Activated CD4-positive, alpha-beta memory T cell treated with anti-CD3 and anti-CD28 coated beads for 36 hours (primary cell): ENCODE measurements at regions of chr9 and their contacts with region 1.

Region 1: DNA sequence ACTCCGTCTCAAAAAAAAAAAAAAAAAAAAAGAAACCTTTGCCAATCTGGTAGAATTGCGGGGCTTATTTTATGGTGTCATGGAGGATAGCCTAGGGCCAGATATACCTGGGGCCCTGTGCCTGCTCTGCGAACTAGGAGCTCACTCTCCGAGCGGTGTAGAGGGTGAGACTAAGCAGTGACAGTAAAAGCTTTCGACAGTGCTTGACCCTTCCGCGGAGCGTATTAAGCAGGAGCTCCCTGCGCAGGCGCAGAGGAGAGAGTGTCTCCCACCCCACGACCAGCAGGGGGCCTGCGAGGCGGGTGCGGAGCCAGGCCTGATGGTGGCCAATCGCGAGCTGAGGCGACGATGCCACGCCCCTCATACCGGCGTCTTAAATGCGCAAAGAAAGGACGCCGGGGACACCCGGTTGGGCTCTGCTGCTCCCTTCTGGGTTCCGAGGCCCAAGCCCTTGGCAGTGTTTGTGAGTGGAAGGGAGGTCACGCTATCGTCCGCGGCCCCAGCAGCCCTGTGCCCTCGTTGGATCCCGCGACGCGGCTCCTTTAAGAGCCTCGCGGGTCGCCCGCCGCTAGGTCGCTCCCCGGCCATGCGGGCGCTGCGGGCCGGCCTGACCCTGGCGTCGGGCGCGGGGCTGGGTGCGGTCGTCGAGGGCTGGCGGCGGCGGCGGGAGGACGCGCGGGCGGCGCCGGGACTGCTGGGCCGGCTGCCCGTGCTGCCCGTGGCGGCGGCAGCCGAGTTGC is at the start of gene ENDOG:
- DNase-seq: peak; percentile 99
- H3K4me3 Mint-ChIP-seq: peak within 1 kb of the TSS; percentile 77
- H3K27ac Mint-ChIP-seq: peak within 1 kb of the TSS; percentile 23
- H3K4me1 Mint-ChIP-seq: peaks cover 17% of the 10 kb centered on the region
- H3K27me3 Mint-ChIP-seq: no peaks in the 10 kb centered on the region
- total RNA-seq, gene ENDOG: 13.8 to 14.2 TPM

Region 2: DNA sequence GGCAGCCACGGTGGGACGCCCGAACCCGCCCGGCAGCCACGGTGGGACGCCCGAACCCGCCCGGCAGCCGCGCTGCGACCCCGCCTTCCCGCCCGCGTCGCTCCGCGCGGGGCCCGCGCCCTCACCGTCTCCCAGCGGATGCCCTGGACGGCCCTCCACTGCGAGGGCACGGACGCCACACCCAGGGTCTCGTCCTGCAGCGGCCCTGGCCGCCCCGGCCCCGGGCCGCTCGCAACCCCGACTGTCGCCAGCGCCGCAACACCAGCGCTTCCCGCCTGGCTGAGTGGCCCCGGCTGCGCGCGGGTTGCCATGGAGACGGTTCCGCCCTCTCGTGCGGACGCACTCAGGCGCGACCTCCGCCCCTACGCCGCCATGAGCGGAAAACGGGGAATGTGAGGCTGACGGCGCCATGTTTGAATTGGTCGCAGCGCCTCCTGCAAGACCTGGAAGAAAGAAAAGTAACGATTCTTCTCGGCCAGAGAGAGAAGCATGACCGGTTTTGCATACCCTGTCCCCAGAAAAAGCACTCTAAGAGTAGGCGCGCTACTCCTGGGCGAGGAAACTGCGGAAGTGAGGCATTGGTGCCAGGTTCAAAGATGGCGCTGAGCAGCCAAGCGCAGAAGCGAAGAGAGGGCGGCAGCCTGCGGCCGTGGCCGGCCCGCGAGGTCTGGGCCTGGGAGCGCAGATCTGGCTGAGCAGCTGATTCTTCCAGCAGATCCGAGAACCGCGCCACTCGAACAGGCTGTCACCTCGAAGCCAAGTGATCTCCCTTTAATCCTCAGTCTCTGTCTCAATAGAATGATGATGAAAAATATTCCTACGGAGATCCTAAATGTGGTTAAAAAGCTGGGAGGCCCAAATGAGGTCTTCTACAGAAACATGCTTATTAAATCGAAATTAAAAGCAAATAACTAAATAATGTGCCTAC is 161.6 kb before region 1 on chr9 and contains the start of gene DYNC2I2:
- CTCF ChIA-PET with region 1: interaction called, 5 read pairs
- POLR2A ChIA-PET with region 1: no interaction called
- intact Hi-C with region 1: loop called (anchors 5 kb)
- DNase-seq: peak; percentile 97
- H3K4me3 Mint-ChIP-seq: peak within 1 kb of the TSS; percentile 83
- H3K27ac Mint-ChIP-seq: peak within 1 kb of the TSS; percentile 99
- H3K4me1 Mint-ChIP-seq: peaks cover 7% of the 10 kb centered on the region
- H3K27me3 Mint-ChIP-seq: no peaks in the 10 kb centered on the region
- total RNA-seq, gene DYNC2I2: 44.9 to 45.2 TPM

Region 3: GRCh38 chr9:128723866-128724743 is 94.2 kb before region 1 on chr9 and contains the start of gene ZDHHC12:
- CTCF ChIA-PET with region 1: interaction called, 13 read pairs
- POLR2A ChIA-PET with region 1: interaction called, 3 read pairs
- intact Hi-C with region 1: loop called (anchors 5 kb)
- DNase-seq: peak; percentile 99
- H3K4me3 Mint-ChIP-seq: peak within 1 kb of the TSS; percentile 95
- H3K27ac Mint-ChIP-seq: peak within 1 kb of the TSS; percentile 91
- H3K4me1 Mint-ChIP-seq: peaks cover 31% of the 10 kb centered on the region
- H3K27me3 Mint-ChIP-seq: no peaks in the 10 kb centered on the region
- total RNA-seq, gene ZDHHC12: 65.8 to 68.7 TPM

Region 4: GRCh38 chr9:128781187-128782070 is 36.8 kb before region 1 on chr9:
- CTCF ChIA-PET with region 1: interaction called, 12 read pairs
- POLR2A ChIA-PET with region 1: no interaction called
- intact Hi-C with region 1: no loop called
- DNase-seq: no peak
- H3K4me3 Mint-ChIP-seq: no peak overlapping the region
- H3K27ac Mint-ChIP-seq: no peak overlapping the region
- H3K4me1 Mint-ChIP-seq: no peaks in the 10 kb centered on the region
- H3K27me3 Mint-ChIP-seq: no peaks in the 10 kb centered on the region

Region 5: DNA sequence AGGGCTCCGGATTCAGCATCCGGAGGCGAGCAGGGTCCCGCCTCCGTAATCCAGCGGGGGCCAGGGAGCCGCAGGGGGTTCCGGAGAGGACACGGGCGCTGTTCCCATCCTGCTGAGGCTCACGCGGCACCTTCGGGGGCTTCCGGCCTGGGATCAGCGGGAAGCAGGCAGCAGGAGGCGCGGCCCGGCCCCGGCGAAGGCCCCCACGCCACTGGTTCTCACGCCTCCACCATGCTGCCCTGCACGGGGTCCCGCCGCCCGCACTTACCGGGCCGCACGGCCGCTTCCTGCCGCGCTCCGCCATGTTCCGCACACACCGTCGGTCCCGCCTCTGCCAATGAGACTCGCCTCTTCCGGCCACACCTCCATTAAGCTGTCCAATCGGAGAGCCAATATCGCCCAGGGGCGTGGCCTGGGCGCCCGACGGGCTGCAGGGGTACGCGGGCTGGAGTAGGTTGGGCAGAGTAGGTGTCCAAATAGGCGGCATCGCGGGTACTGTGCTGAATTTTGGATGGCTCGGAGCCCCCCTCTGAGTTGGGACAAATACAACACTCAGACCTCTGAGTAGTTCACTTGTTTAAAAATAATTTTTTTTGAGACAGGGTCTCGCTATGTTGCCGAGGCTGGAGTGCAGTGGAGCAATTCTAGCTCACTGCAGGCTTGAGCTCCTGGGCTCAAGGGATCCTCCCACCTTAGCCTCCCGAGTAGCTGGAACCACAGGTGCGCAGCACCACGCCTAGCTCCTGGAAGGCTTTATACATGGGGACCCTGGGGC is 11.4 kb after region 1 on chr9 and contains the start of gene SPOUT1:
- CTCF ChIA-PET with region 1: interaction called, 39 read pairs
- POLR2A ChIA-PET with region 1: interaction called, 31 read pairs
- intact Hi-C with region 1: loop called (anchors 1 kb)
- DNase-seq: peak; percentile 97
- H3K4me3 Mint-ChIP-seq: peak within 1 kb of the TSS; percentile 91
- H3K27ac Mint-ChIP-seq: peak within 1 kb of the TSS; percentile 86
- H3K4me1 Mint-ChIP-seq: peaks cover 23% of the 10 kb centered on the region
- H3K27me3 Mint-ChIP-seq: no peaks in the 10 kb centered on the region
- total RNA-seq, gene SPOUT1: 89.2 to 94.2 TPM

Region 6: GRCh38 chr9:128927731-128928411 is 109.6 kb after region 1 on chr9:
- CTCF ChIA-PET with region 1: interaction called, 26 read pairs
- POLR2A ChIA-PET with region 1: no interaction called
- intact Hi-C with region 1: no loop called
- DNase-seq: peak; percentile 65
- H3K4me3 Mint-ChIP-seq: no peak overlapping the region
- H3K27ac Mint-ChIP-seq: no peak overlapping the region
- H3K4me1 Mint-ChIP-seq: peaks cover 9% of the 10 kb centered on the region
- H3K27me3 Mint-ChIP-seq: no peaks in the 10 kb centered on the region

Region 7: DNA sequence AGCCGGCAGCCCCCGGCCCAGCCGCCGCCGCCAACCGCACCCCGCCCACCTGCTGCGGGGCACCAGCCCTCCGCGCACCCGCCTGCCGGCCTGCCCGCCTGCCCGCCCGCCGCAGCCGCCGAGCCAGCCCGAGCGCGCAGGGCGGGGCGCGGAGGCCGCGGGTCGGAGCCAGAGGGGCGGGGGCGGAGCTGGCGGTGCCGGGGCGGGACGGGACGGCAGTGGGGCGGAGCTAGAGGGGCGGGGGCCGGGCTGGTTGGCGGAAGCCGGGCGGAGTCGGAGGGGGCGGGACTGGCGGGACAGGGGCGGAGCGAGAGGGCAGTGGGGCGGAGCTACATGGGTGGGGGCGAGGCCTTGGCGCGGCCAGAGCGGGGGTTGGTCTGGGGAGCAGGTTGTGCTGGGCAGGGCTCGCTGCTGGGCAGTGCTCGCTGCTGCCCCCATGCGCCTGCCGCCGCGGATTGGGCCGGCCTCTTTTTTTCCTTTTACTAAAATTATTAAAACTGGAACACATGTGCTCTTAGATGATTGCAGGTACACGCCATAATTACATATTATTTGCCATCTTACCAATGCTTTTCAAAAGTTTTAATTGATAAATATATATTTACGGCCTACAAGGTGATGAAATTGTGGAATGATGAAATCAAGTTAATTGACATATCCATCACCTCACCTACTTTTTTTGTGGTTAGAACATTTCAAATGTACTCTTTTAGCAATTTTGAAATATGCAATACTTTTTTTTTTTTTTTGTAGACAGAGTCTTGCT is 210.1 kb after region 1 on chr9 and contains the start of gene SH3GLB2:
- CTCF ChIA-PET with region 1: no interaction called
- POLR2A ChIA-PET with region 1: no interaction called
- intact Hi-C with region 1: loop called (anchors 1 kb)
- DNase-seq: peak; percentile 97
- H3K4me3 Mint-ChIP-seq: peak within 1 kb of the TSS; percentile 84
- H3K27ac Mint-ChIP-seq: peak within 1 kb of the TSS; percentile 55
- H3K4me1 Mint-ChIP-seq: peaks cover 22% of the 10 kb centered on the region
- H3K27me3 Mint-ChIP-seq: no peaks in the 10 kb centered on the region
- total RNA-seq, gene SH3GLB2: 59.5 to 62.3 TPM